Psoas muscle (tissue), 8 donors: ENCODE measurements at regions of chr14 and their contacts with region 1.

Region 1: DNA sequence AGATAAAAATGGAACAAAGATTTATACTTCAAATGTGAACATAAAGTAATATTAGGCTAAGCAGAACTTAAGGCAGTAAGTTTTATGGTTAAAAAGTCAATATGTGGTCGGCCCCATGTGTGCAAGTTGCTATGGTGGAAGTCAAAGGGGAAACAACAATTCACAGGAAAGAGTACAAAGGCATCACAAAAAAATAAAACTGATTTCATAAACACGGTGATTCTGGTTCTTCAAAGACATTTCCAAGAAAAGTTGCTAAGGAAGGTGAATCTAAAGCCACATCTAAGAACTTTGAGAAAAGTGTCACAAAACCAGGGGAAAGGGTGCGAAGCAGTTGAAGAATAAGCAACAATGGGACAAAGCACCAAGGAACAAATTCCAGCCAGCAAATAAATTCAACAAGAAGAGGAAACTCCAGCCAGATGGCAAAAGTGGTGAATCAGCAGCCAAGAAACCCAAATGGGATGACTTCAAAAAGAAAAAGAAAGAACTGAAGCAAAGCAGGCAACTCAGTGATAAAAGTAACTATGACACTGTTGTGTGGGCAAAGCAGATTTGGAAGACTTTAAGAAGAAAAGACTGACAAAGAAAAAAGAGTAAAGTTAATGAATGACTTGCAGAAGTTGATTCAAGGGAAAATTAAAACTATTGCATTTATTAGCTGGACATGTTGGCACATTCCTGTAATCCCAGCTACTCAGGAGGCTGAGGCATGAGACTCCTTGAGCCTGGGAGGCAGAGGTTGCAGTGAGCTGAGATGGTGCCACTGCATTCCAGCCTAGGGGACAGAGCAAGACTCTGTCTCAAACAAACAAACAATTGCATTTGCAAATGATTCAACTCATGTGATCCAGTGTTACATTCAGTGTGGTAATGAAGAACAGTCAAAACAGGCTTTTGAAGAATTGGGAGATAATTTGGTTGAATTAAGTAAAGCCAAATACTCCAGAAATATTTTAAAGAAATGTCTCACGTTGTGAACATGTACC is 19.5 kb downstream of the PTGDR start:
- DNase-seq: no peak
- ATAC-seq: no peak
- H3K4me3 ChIP-seq: no peak overlapping the region
- H3K27ac ChIP-seq: no peak overlapping the region
- H3K4me1 ChIP-seq: no peaks in the 10 kb centered on the region
- H3K27me3 ChIP-seq: no peaks in the 10 kb centered on the region
- CTCF ChIP-seq: no peak

Region 2: DNA sequence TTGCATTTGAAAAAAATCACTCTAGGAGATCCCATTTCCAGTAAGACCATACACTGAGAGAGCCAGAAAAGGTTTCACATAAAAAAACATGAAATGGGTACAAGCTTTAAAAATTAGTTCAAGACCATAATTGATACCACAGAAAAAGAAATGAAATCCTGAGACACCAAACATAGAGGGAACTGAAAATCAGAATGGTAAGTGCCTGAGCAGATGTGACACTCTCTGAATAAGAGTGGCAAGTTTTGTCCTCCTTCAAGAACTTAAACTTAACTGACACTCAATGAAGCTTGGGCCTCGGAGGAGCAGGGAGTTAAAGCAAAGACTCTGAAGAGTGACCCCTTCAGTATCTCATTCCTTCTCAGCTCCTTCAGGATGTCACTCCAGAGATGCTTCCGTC is 42.6 kb before region 1 on chr14:
- intact Hi-C with region 1: no loop called
- DNase-seq: no peak
- ATAC-seq: no peak
- H3K4me3 ChIP-seq: no peak overlapping the region
- H3K27ac ChIP-seq: no peak overlapping the region
- H3K4me1 ChIP-seq: no peaks in the 10 kb centered on the region
- H3K27me3 ChIP-seq: no peaks in the 10 kb centered on the region
- CTCF ChIP-seq: no peak

Region 3: DNA sequence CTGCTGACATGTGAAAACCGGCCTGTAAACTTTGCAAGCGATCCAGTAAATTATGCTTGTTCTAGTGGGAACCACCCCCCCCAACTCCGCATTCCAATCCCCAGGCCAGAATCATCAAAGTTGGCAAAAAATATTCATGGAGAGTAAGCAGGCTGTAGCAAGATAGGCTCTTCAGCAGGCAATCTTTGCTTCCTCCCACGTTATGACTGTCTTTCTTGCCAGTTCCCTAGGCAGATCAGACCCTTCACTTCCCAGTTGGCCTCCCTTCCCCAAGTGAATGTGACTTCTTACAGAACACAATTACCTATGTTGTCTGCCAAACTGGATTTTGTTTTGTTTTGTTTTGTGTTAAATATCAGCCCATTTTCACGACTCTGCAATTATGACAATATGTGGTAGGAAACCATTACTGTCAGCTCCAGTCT is 26.0 kb after region 1 on chr14:
- intact Hi-C with region 1: loop called in 1 of 2 experiments (anchors 1 kb)
- DNase-seq: no peak
- ATAC-seq: no peak
- H3K4me3 ChIP-seq: peak overlapping the region; percentile 67
- H3K27ac ChIP-seq: no peak overlapping the region
- H3K4me1 ChIP-seq: no peaks in the 10 kb centered on the region
- H3K27me3 ChIP-seq: peaks cover under 1 to 40% (median 6%) of the 10 kb centered on the region in 3 donors
- CTCF ChIP-seq: no peak